ENCODE measurements at regions of chr3 and their contacts with region 1.

Region 1: DNA sequence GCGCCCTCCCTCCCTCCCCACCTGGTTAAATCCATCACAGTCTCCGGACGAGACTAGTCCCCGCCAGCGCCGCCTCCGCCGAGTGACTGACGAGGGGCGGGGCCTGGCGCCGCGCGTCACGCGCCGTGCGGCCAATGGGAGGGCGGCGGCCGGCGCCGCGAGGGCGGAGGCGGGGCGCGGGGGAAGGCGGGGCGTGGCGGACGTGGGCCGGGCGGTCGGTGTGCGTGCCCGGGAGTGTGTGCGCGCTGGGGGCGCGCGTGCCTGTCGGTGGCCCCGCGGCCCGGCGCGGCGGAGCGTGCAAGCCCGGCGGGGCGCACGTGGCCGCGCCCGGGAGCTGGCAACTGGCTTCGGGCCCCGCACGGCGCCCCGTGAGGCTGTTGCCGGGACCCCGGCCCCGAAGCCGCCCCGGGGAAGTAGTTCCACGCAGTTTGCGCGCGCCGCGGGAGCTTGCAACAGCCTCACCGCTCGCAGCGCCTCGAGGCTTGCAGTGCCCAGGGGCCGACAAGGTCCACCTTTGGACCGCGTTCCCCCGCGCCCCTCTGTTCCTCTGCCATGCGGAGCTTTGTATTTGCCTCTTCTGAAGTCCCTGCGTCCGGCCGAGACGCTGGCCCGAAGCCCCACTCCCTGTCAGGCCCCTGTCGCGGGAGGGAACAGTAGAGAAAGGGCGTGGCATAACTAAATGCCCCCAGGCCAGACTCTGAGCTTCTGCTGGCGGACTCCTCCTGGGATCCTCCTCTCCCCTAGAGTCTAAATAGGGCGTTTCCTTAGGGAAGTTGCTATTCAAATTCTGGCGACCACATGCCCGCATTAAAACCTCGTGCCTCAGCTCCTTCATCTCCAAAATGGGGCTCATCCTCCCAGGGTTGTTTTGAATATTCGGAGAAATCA is 400.9 kb downstream of the SHQ1 start:
- DNase-seq: peak; percentile 88 to 98 (median 94)
- ATAC-seq: peak; percentile 95
- H3K4me3 ChIP-seq: peak overlapping the region; percentile 45 to 66
- H3K4me3 Mint-ChIP-seq: peak overlapping the region; percentile 100
- H3K27ac ChIP-seq: no peak overlapping the region
- H3K27ac Mint-ChIP-seq: peak overlapping the region; percentile 73
- H3K4me1 ChIP-seq: peaks cover 29% of the 10 kb centered on the region
- H3K4me1 Mint-ChIP-seq: peaks cover 41% of the 10 kb centered on the region
- H3K27me3 ChIP-seq: no peaks in the 10 kb centered on the region
- H3K27me3 Mint-ChIP-seq: peaks cover 9% of the 10 kb centered on the region
- CTCF ChIP-seq: no peak

Region 2: GRCh38 chr3:72255791-72256559 is 191.3 kb before region 1 on chr3:
- CTCF ChIA-PET with region 1: interaction called, 3 read pairs
- POLR2A ChIA-PET with region 1: no interaction called
- intact Hi-C with region 1: loop called in 1 of 2 experiments (anchors 10 kb)
- DNase-seq: peak in 7 of 9 experiments; percentile 10 to 69 (median 29)
- ATAC-seq: peak; percentile 77
- H3K4me3 ChIP-seq: no peak overlapping the region
- H3K4me3 Mint-ChIP-seq: peak overlapping the region; percentile 59
- H3K27ac ChIP-seq: no peak overlapping the region
- H3K27ac Mint-ChIP-seq: peak overlapping the region; percentile 55
- H3K4me1 ChIP-seq: peaks cover 35% of the 10 kb centered on the region
- H3K4me1 Mint-ChIP-seq: peaks cover 41% of the 10 kb centered on the region
- H3K27me3 ChIP-seq: no peaks in the 10 kb centered on the region
- H3K27me3 Mint-ChIP-seq: no peaks in the 10 kb centered on the region
- CTCF ChIP-seq: no peak

Region 3: DNA sequence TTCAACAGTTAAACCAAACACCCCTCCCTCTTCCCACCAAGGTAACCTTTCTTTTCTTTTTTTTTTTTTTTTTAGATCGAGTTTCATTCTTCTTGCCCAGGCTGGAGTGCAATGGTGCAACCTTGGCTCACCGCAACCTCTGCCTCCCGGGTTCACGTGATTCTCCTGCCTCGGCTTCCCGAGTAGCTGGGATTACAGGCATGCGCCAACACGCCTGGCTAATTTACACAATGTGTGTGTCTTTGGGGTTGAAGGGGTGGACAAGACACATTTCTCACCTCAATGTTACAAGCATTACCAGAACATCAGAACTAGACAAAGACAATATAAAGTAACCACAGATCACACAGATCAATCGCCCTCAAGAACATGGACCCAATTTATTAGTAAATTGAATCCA is 30.8 kb before region 1 on chr3:
- CTCF ChIA-PET with region 1: no interaction called
- POLR2A ChIA-PET with region 1: no interaction called
- intact Hi-C with region 1: loop called in 1 of 2 experiments (anchors 2 kb)
- DNase-seq: no peak
- ATAC-seq: no peak
- H3K4me3 ChIP-seq: no peak overlapping the region
- H3K4me3 Mint-ChIP-seq: no peak overlapping the region
- H3K27ac ChIP-seq: no peak overlapping the region
- H3K27ac Mint-ChIP-seq: no peak overlapping the region
- H3K4me1 ChIP-seq: peaks cover 28% of the 10 kb centered on the region
- H3K4me1 Mint-ChIP-seq: peaks cover 74% of the 10 kb centered on the region
- H3K27me3 ChIP-seq: no peaks in the 10 kb centered on the region
- H3K27me3 Mint-ChIP-seq: no peaks in the 10 kb centered on the region
- CTCF ChIP-seq: no peak

Region 4: DNA sequence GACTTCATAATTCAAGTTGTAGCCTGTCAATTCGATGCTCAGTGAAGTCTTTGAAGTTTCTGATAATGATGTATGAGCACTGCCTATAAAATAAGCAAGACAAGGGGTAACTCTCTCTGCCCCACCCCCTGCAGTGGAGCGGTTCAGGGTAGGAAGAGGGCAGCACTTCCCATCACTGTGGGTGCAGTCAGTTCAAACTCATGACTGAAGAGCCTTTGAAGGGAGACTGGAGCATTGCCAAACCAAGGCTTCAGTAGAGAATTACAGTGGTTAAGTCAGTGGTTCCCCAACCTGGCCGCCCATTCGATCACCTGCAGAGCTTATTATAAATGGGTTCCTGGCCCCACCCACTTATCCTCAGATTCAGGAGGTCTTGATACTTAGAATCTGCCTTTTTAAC is 210.4 kb after region 1 on chr3:
- CTCF ChIA-PET with region 1: no interaction called
- POLR2A ChIA-PET with region 1: no interaction called
- intact Hi-C with region 1: loop called in 1 of 2 experiments (anchors 10 kb)
- DNase-seq: peak; percentile 9 to 87 (median 58)
- ATAC-seq: peak; percentile 96
- H3K4me3 ChIP-seq: no peak overlapping the region
- H3K4me3 Mint-ChIP-seq: peak overlapping the region; percentile 9
- H3K27ac ChIP-seq: no peak overlapping the region
- H3K27ac Mint-ChIP-seq: no peak overlapping the region
- H3K4me1 ChIP-seq: peaks cover 15% of the 10 kb centered on the region
- H3K4me1 Mint-ChIP-seq: peaks cover 19% of the 10 kb centered on the region
- H3K27me3 ChIP-seq: peaks cover 0 to 2% of the 10 kb centered on the region in 2 experiments
- H3K27me3 Mint-ChIP-seq: peaks cover 5% of the 10 kb centered on the region
- CTCF ChIP-seq: no peak

Region 5: GRCh38 chr3:72756900-72757299 is 309.6 kb after region 1 on chr3:
- CTCF ChIA-PET with region 1: no interaction called
- POLR2A ChIA-PET with region 1: no interaction called
- intact Hi-C with region 1: loop called in 1 of 2 experiments (anchors 10 kb)
- DNase-seq: peak in 8 of 9 experiments; percentile 10 to 80 (median 52)
- ATAC-seq: peak; percentile 97
- H3K4me3 ChIP-seq: peak overlapping the region in 1 of 2 experiments; percentile 38
- H3K4me3 Mint-ChIP-seq: peak overlapping the region; percentile 60
- H3K27ac ChIP-seq: peak overlapping the region; percentile 51 to 52
- H3K27ac Mint-ChIP-seq: peak overlapping the region; percentile 93
- H3K4me1 ChIP-seq: peaks cover 44% of the 10 kb centered on the region
- H3K4me1 Mint-ChIP-seq: peaks cover 59% of the 10 kb centered on the region
- H3K27me3 ChIP-seq: no peaks in the 10 kb centered on the region
- H3K27me3 Mint-ChIP-seq: no peaks in the 10 kb centered on the region
- CTCF ChIP-seq: no peak

Region 6: DNA sequence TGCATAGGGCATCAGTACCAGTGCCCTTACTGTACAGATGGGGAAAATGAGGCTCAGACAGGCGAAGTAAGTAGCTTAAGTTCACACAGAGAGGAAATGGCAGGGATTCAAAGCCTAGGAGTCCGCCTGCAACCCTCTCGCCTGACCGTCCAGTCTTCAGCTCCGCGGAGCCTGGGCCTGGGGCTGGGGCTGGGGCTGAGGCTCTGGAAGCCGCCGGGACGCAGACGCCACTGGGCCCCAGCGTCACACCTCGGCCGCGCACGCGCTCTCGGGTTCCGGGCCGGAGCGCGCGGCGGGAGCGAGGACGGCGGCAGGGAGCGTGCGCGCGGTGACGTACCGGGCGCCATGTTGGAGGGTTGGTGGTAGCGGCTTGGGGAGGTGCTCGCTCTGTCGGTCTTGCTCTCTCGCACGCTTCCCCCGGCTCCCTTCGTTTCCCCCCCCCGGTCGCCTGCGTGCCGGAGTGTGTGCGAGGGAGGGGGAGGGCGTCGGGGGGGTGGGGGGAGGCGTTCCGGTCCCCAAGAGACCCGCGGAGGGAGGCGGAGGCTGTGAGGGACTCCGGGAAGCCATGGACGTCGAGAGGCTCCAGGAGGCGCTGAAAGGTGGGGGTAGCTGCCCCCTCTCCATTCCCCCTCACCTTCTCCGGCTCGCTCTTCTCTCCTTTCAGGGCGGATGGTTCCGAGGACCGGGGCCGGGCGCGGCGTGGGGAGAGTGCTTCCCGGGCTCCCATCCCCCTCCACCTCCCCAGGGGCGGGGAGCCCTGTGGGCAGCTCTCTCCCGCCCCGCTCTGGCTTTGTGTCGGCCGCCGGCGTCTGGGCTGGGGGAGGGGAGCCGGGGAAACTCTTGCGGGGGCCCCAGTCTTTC is 549.4 kb after region 1 on chr3 and contains the start of gene PPP4R2:
- CTCF ChIA-PET with region 1: no interaction called
- POLR2A ChIA-PET with region 1: interaction called, 3 read pairs
- intact Hi-C with region 1: loop called in 1 of 2 experiments (anchors 1 kb)
- DNase-seq: peak; percentile 83 to 97 (median 91)
- ATAC-seq: peak; percentile 87
- H3K4me3 ChIP-seq: peak within 1 kb of the TSS; percentile 82 to 96
- H3K4me3 Mint-ChIP-seq: peak within 1 kb of the TSS; percentile 86
- H3K27ac ChIP-seq: peak within 1 kb of the TSS; percentile 89 to 92
- H3K27ac Mint-ChIP-seq: peak within 1 kb of the TSS; percentile 90
- H3K4me1 ChIP-seq: peaks cover 44% of the 10 kb centered on the region
- H3K4me1 Mint-ChIP-seq: peaks cover 46% of the 10 kb centered on the region
- H3K27me3 ChIP-seq: no peaks in the 10 kb centered on the region
- H3K27me3 Mint-ChIP-seq: no peaks in the 10 kb centered on the region
- CTCF ChIP-seq: no peak
- total RNA-seq, gene PPP4R2: 77.7 to 80.4 TPM